ENCODE measurements at regions of chr9 and their contacts with region 1.

Region 1: GRCh38 chr9:19799784-19800183 is 10.9 kb upstream of the SLC24A2 start:
- DNase-seq: no peak
- ATAC-seq: no peak
- H3K4me3 ChIP-seq: no peak overlapping the region
- H3K27ac ChIP-seq: no peak overlapping the region
- H3K4me1 ChIP-seq: no peaks in the 10 kb centered on the region
- H3K27me3 ChIP-seq: peaks cover 27% of the 10 kb centered on the region; the same call in 1 of the 2 replicates
- CTCF ChIP-seq: no peak
- POLR2A ChIP-seq: no peak
- RAD21 ChIP-seq: no peak

Region 2: DNA sequence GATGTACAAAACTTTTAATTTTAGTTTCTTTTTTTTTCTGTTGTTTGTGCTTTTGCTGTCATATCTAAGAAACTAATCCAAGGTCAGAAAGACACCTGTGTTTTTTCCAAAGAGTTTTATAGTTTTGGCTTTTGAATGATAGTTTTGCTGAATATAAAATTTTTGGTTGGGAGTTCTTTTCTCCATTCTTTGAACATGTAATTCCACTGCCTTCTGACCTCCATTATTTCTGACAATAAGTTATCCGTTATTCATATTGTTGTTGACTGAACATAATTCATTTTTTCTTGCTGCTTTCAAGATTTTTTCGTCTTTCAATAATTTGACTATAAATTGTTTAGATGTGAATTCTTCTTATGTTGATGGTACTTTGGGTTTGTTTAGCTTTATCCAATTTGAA is 71.2 kb after region 1 on chr9:
- CTCF ChIA-PET with region 1: no interaction called
- POLR2A ChIA-PET with region 1: no interaction called
- RAD21 ChIA-PET with region 1: no interaction called
- intact Hi-C with region 1: loop called (anchors 10 kb)
- DNase-seq: no peak
- ATAC-seq: no peak
- H3K4me3 ChIP-seq: no peak overlapping the region
- H3K27ac ChIP-seq: no peak overlapping the region
- H3K4me1 ChIP-seq: no peaks in the 10 kb centered on the region
- H3K27me3 ChIP-seq: peaks cover 15% of the 10 kb centered on the region
- CTCF ChIP-seq: no peak
- POLR2A ChIP-seq: no peak
- RAD21 ChIP-seq: no peak

Measured in HCT116 (cell line).